Activated CD4-positive, alpha-beta T cell treated with anti-CD3 and anti-CD28 coated beads for 36 hours (primary cell): ENCODE measurements at regions of chr10 and their contacts with region 1.

Region 1: DNA sequence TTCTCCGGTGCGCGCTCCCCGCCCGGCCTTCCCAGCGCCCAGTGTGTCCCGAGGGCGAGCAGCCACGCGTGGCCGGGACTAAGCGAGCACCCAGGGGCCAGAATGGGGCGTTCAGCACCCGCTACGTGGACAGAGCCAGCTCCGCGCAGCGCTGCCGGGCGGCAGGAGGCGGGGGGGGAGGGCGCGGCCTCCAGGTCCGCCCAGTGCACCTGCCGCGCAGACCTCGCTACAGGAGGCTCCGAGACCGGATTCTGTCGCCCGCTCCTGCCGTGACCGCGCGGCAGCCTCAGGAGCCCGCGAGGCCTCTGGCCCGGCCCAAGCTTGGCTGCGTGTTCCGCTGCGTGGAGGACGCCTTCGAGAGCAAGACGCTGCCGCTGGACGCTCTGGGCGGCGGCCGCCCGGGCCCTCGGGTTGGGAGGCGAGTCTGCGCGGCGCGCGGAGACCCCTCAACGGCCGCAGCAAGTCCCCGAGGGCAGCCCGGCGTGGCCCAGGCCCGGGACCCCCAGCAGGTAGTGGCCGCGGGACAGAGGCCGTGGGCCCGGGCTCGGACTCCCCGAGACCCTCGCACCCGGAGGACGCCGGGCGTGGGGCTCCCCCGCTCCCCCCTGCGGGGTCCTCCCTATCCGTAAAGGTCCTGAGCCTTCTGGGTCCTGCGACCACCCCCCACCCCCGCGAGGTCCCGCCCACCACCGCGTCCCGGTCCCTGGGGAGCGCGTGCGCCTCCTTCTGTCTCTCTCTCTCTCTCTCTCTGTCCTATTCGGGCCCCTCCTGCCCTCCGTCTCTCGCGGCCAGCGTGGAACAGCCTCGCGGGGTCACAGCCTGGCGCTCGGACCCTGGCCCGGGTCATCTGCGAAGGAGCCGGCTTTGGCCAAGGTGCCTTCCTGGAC is 904 bp upstream of the DPYSL4 start:
- DNase-seq: peak; percentile 76
- ATAC-seq: peak; percentile 85
- H3K4me3 Mint-ChIP-seq: no peak overlapping the region
- H3K27ac Mint-ChIP-seq: no peak overlapping the region
- H3K4me1 Mint-ChIP-seq: peaks cover 3% of the 10 kb centered on the region
- H3K27me3 Mint-ChIP-seq: peaks cover 37% of the 10 kb centered on the region

Region 2: DNA sequence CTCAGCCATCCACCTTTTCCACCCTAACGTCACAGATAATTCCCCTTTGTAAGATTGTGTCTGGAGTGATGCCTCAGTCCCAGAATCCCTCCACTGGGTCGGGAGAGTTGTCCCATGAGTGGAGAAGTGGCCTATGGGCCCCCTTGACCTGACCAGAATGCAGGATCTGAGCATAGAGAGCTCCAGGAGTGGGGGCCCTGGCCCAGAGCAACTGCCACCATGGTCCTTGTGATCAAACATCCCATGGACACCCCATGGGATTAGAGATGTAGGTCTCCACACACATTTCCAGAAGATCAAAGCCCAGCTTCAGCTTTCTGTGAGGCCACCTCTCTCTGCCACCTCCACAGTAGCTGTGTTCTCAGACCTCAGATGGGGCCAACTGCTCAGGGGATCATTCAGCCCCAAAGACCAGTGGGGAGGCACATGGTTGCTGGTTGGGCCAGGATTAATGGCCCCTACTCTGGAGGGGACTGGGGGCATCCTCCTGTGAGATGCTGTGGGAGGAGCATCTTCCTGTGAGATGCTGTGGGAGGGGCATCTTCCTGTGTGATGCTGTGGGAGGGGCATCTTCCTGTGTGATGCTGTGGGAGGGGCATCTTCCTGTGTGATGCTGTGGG is 27.6 kb before region 1 on chr10:
- CTCF ChIA-PET with region 1: no interaction called
- POLR2A ChIA-PET with region 1: no interaction called
- intact Hi-C with region 1: loop called in 1 of 2 experiments (anchors 1 kb)
- DNase-seq: peak; percentile 57
- ATAC-seq: peak; percentile 56
- H3K4me3 Mint-ChIP-seq: no peak overlapping the region
- H3K27ac Mint-ChIP-seq: peak overlapping the region; percentile 82
- H3K4me1 Mint-ChIP-seq: peaks cover 22% of the 10 kb centered on the region
- H3K27me3 Mint-ChIP-seq: no peaks in the 10 kb centered on the region

Region 3: GRCh38 chr10:132163278-132163765 is 22.5 kb before region 1 on chr10:
- CTCF ChIA-PET with region 1: no interaction called
- POLR2A ChIA-PET with region 1: no interaction called
- intact Hi-C with region 1: loop called in 1 of 2 experiments (anchors 1 kb)
- DNase-seq: peak; percentile 84
- ATAC-seq: peak; percentile 78
- H3K4me3 Mint-ChIP-seq: no peak overlapping the region
- H3K27ac Mint-ChIP-seq: no peak overlapping the region
- H3K4me1 Mint-ChIP-seq: peaks cover 20% of the 10 kb centered on the region
- H3K27me3 Mint-ChIP-seq: no peaks in the 10 kb centered on the region

Region 4: GRCh38 chr10:132174237-132174636 is 11.6 kb before region 1 on chr10:
- CTCF ChIA-PET with region 1: no interaction called
- POLR2A ChIA-PET with region 1: no interaction called
- intact Hi-C with region 1: no loop called
- DNase-seq: no peak
- ATAC-seq: no peak
- H3K4me3 Mint-ChIP-seq: no peak overlapping the region
- H3K27ac Mint-ChIP-seq: no peak overlapping the region
- H3K4me1 Mint-ChIP-seq: peaks cover 7% of the 10 kb centered on the region
- H3K27me3 Mint-ChIP-seq: peaks cover 24% of the 10 kb centered on the region